Activated CD8-positive, alpha-beta T cell treated with anti-CD3 and anti-CD28 coated beads for 36 hours (primary cell): ENCODE measurements at regions of chr2 and their contacts with region 1.

Region 1: GRCh38 chr2:30421604-30422443 is 25.2 kb upstream of the LCLAT1 start:
- DNase-seq: peak; percentile 65
- ATAC-seq: peak; percentile 49
- H3K4me3 Mint-ChIP-seq: peak overlapping the region; percentile 70
- H3K27ac Mint-ChIP-seq: peak overlapping the region; percentile 96
- H3K4me1 Mint-ChIP-seq: peaks cover 36% of the 10 kb centered on the region
- H3K27me3 Mint-ChIP-seq: no peaks in the 10 kb centered on the region
- CTCF ChIP-seq: no peak

Region 2: DNA sequence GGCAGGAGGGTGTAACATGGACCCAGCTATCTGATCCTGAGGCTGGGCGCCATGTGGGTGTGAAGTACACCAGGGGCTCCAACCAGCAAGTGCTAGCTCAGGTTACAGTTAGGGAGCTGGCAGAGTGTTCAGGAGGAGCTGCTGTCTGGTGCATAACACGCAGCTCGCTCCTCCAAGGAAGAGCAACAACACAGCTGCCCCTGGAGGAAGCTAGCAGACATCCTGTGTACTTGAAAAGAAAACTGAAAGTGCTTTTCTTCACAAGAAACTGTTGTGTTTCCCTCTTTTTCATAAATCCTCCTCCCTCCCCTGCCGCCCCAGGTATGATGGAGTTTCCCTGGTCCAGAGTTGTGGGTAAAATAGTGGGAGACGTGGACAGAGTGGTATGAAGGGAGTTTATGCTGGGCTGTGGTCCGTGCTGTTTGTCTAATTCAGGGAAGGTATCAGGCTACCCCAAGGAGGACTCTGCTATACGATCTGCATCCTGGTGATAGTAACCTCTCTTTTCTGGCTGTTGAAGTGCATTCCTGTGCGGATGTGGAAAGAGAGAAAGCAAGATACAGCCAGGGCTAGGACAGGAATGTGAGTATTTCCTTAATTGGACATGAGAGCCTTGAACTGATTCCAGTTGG is 196.6 kb before region 1 on chr2:
- CTCF ChIA-PET with region 1: interaction called, 4 read pairs
- POLR2A ChIA-PET with region 1: interaction called, 13 read pairs
- intact Hi-C with region 1: no loop called
- DNase-seq: peak; percentile 53
- ATAC-seq: peak; percentile 45
- H3K4me3 Mint-ChIP-seq: peak overlapping the region; percentile 87
- H3K27ac Mint-ChIP-seq: peak overlapping the region; percentile 99
- H3K4me1 Mint-ChIP-seq: peaks cover 74% of the 10 kb centered on the region
- H3K27me3 Mint-ChIP-seq: no peaks in the 10 kb centered on the region
- CTCF ChIP-seq: no peak

Region 3: GRCh38 chr2:30266051-30266621 is 155.7 kb before region 1 on chr2:
- CTCF ChIA-PET with region 1: interaction called, 3 read pairs
- POLR2A ChIA-PET with region 1: interaction called, 10 read pairs
- intact Hi-C with region 1: no loop called
- DNase-seq: peak; percentile 73
- ATAC-seq: peak; percentile 57
- H3K4me3 Mint-ChIP-seq: peak overlapping the region; percentile 76
- H3K27ac Mint-ChIP-seq: peak overlapping the region; percentile 99
- H3K4me1 Mint-ChIP-seq: peaks cover 81% of the 10 kb centered on the region
- H3K27me3 Mint-ChIP-seq: no peaks in the 10 kb centered on the region
- CTCF ChIP-seq: no peak

Region 4: GRCh38 chr2:30336978-30337841 is 84.6 kb before region 1 on chr2:
- CTCF ChIA-PET with region 1: interaction called, 6 read pairs
- POLR2A ChIA-PET with region 1: interaction called, 13 read pairs
- intact Hi-C with region 1: loop called (anchors 5 kb)
- DNase-seq: peak; percentile 67
- ATAC-seq: peak; percentile 76
- H3K4me3 Mint-ChIP-seq: peak overlapping the region; percentile 59
- H3K27ac Mint-ChIP-seq: peak overlapping the region; percentile 96
- H3K4me1 Mint-ChIP-seq: peaks cover 78% of the 10 kb centered on the region
- H3K27me3 Mint-ChIP-seq: no peaks in the 10 kb centered on the region
- CTCF ChIP-seq: no peak

Region 5: DNA sequence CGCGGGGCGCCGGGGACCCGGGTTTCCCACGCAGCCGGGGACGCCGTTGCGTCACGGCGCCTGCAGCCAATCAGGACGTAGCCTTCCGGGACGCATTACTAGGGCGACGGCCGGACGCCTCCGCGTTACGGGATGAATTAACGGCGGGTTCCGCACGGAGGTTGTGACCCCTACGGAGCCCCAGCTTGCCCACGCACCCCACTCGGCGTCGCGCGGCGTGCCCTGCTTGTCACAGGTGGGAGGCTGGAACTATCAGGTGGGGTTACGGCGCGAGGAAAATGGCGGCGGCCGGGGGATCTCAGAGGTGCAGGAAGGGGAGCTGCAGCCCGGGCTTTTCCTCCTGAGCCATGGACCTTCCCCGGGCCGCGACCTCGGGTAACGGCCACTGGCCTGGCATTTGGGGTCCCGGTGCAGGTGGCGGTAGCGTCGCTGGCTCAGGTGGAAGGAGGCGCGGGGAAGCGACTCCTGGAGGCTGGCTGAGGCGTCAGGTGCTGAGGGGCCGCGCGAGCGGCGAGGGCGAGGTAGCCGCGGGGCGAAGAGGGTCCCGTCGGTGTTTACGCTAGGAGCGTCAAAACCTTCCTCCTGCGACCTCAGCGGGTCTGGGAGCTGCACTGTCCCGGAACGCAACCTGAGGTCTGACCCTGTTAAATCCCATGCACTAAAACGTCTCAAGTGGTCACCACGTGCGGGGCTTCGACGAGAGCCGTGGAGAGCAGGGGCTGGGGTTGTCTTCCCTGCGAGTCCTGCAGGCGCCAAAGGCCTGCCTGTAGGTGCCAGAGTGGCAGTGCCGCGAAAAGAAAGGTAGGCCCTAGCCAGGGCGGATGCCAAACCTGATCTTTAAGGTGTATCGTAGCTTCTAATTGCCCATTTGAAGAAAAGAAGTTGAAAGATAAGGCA is 25.6 kb after region 1 on chr2 and contains the start of gene LCLAT1:
- CTCF ChIA-PET with region 1: interaction called, 5 read pairs
- POLR2A ChIA-PET with region 1: interaction called, 20 read pairs
- intact Hi-C with region 1: no loop called
- DNase-seq: peak; percentile 90
- ATAC-seq: peak; percentile 88
- H3K4me3 Mint-ChIP-seq: peak within 1 kb of the TSS; percentile 89
- H3K27ac Mint-ChIP-seq: peak within 1 kb of the TSS; percentile 97
- H3K4me1 Mint-ChIP-seq: peaks cover 38% of the 10 kb centered on the region
- H3K27me3 Mint-ChIP-seq: no peaks in the 10 kb centered on the region
- CTCF ChIP-seq: no peak
- total RNA-seq, gene LCLAT1: 19.0 to 20.5 TPM